Tibial artery (tissue), 4 donors: ENCODE measurements at regions of chr3 and their contacts with region 1.

Region 1: GRCh38 chr3:53891497-53892285 is at the start of gene SELENOK:
- DNase-seq: peak; percentile 99
- H3K4me3 ChIP-seq: peak within 1 kb of the TSS; percentile 94 to 97
- H3K27ac ChIP-seq: peak within 1 kb of the TSS; percentile 94 to 96
- H3K4me1 ChIP-seq: peaks cover 0 to 30% (median 11%) of the 10 kb centered on the region in 4 donors
- H3K27me3 ChIP-seq: no peaks in the 10 kb centered on the region
- CTCF ChIP-seq: no peak

Region 2: DNA sequence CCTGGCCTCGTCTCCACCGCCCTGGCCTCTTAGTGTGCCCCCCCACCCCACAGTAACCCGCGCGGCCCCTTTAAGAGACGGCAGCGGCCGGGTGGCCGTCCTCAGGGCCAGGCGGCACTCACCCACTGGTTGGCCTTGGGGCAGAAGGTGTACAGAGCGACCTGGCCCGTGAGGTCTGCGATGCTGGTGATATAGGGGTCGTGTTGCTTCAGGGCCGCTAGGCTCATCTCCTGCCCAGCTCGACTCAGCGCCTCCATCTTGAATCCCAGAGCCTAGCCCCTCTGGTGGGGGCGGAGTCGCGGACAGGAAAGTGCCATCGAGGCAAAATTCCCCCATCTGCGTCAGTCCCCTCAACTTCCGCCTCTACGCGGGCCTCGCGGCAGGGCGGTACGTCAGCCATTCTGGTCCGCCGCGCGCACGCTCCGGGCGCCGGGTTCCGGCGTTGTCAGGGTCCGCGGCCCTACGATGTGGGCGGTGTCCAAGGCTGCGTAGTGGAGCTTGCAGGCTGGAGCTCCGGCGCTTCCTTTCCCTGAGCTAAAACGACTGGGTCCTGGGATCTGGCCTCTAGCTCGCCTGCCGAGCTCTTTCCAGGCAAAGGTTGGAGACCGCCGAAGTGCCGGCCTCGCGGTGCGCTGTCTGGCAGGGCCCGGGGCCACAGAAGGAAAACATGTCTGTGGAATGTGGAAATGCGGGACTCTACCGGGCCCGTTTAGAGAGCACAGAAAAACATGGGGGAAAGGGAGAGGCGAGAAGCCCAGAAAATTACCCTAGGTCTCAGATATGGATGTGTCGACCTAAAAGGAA is 544.2 kb before region 1 on chr3 and contains the start of gene DCP1A:
- intact Hi-C with region 1: loop called (anchors 5 kb)
- DNase-seq: peak; percentile 97 to 98
- H3K4me3 ChIP-seq: peak within 1 kb of the TSS; percentile 89 to 95
- H3K27ac ChIP-seq: peak within 1 kb of the TSS; percentile 93 to 98
- H3K4me1 ChIP-seq: peaks cover 0 to 32% (median 18%) of the 10 kb centered on the region in 4 donors
- H3K27me3 ChIP-seq: no peaks in the 10 kb centered on the region
- CTCF ChIP-seq: no peak

Region 3: GRCh38 chr3:54053211-54053610 is 161.5 kb after region 1 on chr3:
- intact Hi-C with region 1: no loop called
- DNase-seq: no peak
- H3K4me3 ChIP-seq: no peak overlapping the region
- H3K27ac ChIP-seq: no peak overlapping the region
- H3K4me1 ChIP-seq: no peaks in the 10 kb centered on the region
- H3K27me3 ChIP-seq: no peaks in the 10 kb centered on the region
- CTCF ChIP-seq: no peak